ENCODE measurements at regions of chr5 and their contacts with region 1.

Region 1: DNA sequence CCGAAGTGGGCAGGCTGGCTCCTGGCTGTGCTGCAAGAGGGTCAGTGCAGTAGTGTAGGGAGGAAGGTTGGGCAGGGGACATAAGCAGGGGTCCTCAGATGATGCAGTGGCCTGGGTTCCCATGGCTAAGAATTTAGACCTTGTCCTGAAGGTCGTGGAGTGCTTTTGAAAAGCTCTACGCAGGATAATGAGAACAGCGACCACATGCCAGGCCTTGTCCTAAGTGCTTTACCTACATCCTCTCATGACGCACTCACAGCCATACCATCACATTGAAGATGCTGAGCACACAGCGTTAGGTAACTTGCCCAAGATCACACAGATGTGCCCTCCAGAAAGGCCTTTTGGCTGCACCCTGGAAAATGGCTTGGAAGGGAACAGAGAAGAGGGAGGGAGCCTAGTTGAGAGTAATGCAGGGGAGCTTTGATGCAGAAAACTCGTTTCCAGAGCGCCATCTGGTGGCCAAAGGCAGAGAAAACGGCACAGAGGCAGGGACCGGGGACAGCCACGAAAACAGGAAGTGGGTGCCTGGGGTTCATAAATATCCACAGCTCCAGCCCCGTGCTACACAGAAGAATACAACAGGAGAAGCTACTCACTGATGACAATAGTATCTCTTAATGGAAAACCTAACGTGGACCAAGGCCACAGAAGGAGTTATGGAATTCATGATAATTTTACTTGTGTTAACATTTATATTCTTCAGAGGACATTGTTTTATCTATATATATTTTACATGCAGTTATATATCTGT is 2.6 kb upstream of the PCDH12 start:
- DNase-seq: peak; percentile 82
- H3K4me3 Mint-ChIP-seq: no peak overlapping the region
- H3K27ac Mint-ChIP-seq: peak overlapping the region; percentile 76
- H3K4me1 Mint-ChIP-seq: peaks cover 35% of the 10 kb centered on the region
- H3K27me3 Mint-ChIP-seq: no peaks in the 10 kb centered on the region

Region 2: GRCh38 chr5:141100240-141100805 is 860.3 kb before region 1 on chr5 and contains the start of gene PCDHB3:
- intact Hi-C with region 1: no loop called
- DNase-seq: no peak
- H3K4me3 Mint-ChIP-seq: no peak within 1 kb of the TSS
- H3K27ac Mint-ChIP-seq: no peak within 1 kb of the TSS
- H3K4me1 Mint-ChIP-seq: peaks cover 3% of the 10 kb centered on the region
- H3K27me3 Mint-ChIP-seq: no peaks in the 10 kb centered on the region
- total RNA-seq, gene PCDHB3: not detected in 2 replicates

Region 3: GRCh38 chr5:141849375-141850243 is 111.0 kb before region 1 on chr5:
- intact Hi-C with region 1: loop called (anchors 2 kb)
- DNase-seq: peak; percentile 66
- H3K4me3 Mint-ChIP-seq: peak overlapping the region; percentile 85
- H3K27ac Mint-ChIP-seq: peak overlapping the region; percentile 84
- H3K4me1 Mint-ChIP-seq: peaks cover 14% of the 10 kb centered on the region
- H3K27me3 Mint-ChIP-seq: no peaks in the 10 kb centered on the region

Region 4: DNA sequence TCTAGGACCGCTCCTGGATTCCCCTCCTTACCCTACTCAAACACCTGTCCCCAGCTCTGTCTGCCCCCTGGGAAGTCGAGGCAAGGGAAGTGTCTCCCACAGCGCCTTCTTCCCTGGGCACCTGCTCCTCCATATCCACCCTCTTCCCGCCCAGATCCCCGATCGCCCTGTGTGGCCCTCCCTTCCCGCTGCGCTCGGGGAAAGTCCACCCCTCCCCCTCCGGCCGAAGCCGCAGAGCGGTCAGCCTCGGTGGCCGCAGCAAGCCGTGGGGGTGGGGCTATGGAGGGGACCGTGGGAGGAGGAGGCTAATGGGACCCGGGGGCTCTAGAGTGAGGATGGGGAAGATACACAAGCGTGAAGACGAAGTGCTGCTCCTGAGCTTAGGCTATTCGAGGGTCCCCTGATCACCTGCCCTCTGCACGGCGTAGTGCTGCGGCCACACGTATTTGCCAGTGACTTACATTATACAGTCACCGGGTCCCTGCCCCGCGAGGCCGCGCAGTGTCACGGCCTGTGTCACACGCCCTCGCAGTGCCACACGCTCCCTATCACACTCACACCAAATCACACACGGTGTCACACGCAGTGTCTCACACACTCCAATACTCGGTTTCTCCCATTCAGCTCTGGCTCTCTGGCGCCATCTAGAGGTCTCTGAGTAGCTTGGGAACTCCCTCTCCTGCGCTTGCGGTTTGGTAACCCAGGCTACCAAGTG is 81.8 kb before region 1 on chr5:
- intact Hi-C with region 1: loop called (anchors 1 kb)
- DNase-seq: peak; percentile 77
- H3K4me3 Mint-ChIP-seq: peak overlapping the region; percentile 78
- H3K27ac Mint-ChIP-seq: peak overlapping the region; percentile 1
- H3K4me1 Mint-ChIP-seq: peaks cover 14% of the 10 kb centered on the region
- H3K27me3 Mint-ChIP-seq: peaks cover 76% of the 10 kb centered on the region

Region 5: GRCh38 chr5:141889282-141889871 is 71.2 kb before region 1 on chr5:
- intact Hi-C with region 1: loop called (anchors 2 kb)
- DNase-seq: no peak
- H3K4me3 Mint-ChIP-seq: no peak overlapping the region
- H3K27ac Mint-ChIP-seq: no peak overlapping the region
- H3K4me1 Mint-ChIP-seq: peaks cover 3% of the 10 kb centered on the region
- H3K27me3 Mint-ChIP-seq: peaks cover 29% of the 10 kb centered on the region

Region 6: GRCh38 chr5:141923448-141924352 is 36.9 kb before region 1 on chr5 and contains the start of gene DELE1:
- intact Hi-C with region 1: loop called (anchors 2 kb)
- DNase-seq: peak; percentile 91
- H3K4me3 Mint-ChIP-seq: peak within 1 kb of the TSS; percentile 88
- H3K27ac Mint-ChIP-seq: peak within 1 kb of the TSS; percentile 89
- H3K4me1 Mint-ChIP-seq: peaks cover 13% of the 10 kb centered on the region
- H3K27me3 Mint-ChIP-seq: no peaks in the 10 kb centered on the region
- total RNA-seq, gene DELE1: 74.1 and 76.8 TPM in 2 replicates

Region 7: DNA sequence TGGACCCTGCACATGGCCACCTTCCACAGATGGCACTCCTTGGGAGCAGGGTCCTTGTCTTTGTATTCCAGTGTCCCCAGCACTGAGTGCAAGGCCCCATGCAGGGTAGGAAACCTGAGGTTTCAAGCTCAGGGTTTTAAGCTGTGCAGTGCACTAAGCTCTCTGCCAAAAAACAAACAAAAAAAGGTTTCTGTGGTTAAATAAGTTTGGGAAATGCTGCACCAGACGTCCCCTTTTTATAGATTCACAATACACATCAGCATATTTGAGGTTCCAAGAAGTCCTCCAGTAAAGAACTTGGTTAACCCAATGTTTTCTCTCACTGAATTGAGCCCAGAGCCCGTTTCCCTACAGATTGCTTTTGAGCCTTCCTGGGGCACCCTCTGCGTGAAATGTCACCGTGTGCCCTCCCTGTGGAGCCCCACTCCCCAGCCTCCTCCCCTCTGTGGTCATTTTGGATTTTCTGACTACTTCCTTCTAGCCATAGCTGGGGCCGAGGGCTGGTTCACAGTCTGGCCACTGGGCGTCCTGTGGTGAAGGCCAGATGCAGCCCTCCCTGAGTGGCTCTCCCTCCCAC is 19.8 kb before region 1 on chr5:
- intact Hi-C with region 1: no loop called
- DNase-seq: no peak
- H3K4me3 Mint-ChIP-seq: no peak overlapping the region
- H3K27ac Mint-ChIP-seq: no peak overlapping the region
- H3K4me1 Mint-ChIP-seq: peaks cover 13% of the 10 kb centered on the region
- H3K27me3 Mint-ChIP-seq: no peaks in the 10 kb centered on the region

Region 8: DNA sequence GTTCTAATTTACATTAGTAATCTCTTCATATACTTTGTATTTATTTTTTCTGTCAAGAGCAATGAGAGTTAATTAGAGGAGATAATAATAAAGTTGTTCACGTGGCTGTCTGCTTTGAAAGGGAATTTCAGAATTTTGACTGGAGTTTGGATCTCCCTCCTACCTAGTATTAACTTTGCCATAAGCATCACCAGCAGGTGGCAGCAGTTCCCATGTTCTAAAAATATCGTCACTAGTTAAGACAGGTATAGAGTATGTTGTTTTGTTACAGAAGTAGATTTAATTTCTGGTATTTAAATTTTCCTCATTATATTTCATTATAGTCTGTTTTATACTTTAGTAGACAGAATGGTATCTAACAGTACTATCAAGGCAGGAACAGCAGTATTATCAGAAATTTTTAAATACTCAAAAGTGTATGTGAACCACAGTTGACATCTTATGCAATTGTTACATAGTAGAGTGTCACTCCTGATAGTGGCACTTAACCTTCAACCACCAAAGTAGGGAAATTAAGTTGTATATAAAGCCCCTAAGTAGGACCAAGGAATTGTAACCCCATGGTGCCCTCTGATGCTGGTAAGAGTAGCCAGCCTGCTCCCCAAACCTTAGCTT is 31.8 kb after region 1 on chr5:
- intact Hi-C with region 1: no loop called
- DNase-seq: no peak
- H3K4me3 Mint-ChIP-seq: no peak overlapping the region
- H3K27ac Mint-ChIP-seq: no peak overlapping the region
- H3K4me1 Mint-ChIP-seq: peaks cover 4% of the 10 kb centered on the region
- H3K27me3 Mint-ChIP-seq: no peaks in the 10 kb centered on the region